ENCODE measurements at regions of chr6 and their contacts with region 1.

Region 1: DNA sequence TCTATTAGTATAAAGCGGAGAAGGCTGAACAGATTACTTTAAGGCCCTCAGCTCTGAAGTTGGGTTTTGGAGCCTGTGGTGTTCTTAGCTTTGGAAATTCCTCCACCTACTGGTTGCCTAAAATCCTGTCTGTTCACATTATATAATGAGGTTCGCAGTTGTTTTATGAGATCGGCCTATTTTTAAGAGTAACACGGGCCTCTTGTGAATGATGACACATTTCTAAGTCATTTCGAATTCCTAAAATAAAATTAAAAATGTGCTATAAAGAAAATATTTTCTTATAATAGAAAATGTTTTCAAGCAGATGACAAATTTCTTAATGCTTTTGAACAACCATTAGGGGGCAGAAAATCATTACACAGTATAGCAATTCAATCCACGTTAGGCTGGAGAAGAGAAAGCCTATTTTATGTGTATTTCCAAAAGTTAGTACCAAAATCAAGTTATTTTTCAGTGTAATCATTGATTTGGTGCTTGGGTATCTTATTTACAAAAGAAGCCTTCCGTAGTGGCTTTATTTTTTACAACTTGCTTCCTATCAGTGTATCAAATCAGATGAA is 15.8 kb upstream of the FAM8A1 start:
- DNase-seq: peak; percentile 67
- ATAC-seq: peak; percentile 78
- H3K4me3 ChIP-seq: peak overlapping the region in 2 of 3 experiments; percentile 34 to 52; a peak in 4 of 6 replicates
- H3K27ac ChIP-seq: no peak overlapping the region
- H3K4me1 ChIP-seq: peaks cover 35% of the 10 kb centered on the region
- H3K27me3 ChIP-seq: no peaks in the 10 kb centered on the region
- CTCF ChIP-seq: peak; percentile 84
- EP300 ChIP-seq: 0 out of 4 replicates have a peak, but pooled peaks of 1 of the 2 experiments have one; percentile 19
- POLR2A ChIP-seq: no peak
- RAD21 ChIP-seq: peak; percentile 78

Region 2: DNA sequence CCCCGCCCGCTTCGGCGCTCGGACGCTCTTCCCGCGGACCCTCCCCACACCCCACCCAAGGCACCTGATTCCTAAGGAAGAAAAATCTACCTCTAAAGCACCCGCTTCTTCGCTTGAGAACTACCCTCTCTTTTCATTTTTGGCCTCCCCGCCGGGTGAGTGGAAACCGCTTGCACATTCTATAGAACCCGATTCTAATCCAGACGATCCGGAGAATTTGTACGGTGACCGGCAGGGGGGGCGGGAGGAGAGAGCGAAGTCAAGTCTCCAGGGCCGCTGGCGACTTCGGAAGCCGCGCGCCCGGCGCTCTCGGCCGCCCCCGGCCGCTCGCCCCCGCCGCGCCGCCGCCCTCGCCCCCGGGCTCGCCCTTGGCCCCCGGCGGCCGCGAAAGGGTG is 303.2 kb before region 1 on chr6 and contains the start of gene RBM24:
- CTCF ChIA-PET with region 1: interaction called, 14 read pairs
- POLR2A ChIA-PET with region 1: no interaction called
- in situ Hi-C with region 1: loop called (anchors 5 kb)
- intact Hi-C with region 1: loop called (anchors 1 kb)
- DNase-seq: peak; percentile 66
- ATAC-seq: peak; percentile 79
- H3K4me3 ChIP-seq: peak within 1 kb of the TSS; percentile 82 to 94 (median 93)
- H3K27ac ChIP-seq: no peak within 1 kb of the TSS
- H3K4me1 ChIP-seq: peaks cover 20% of the 10 kb centered on the region
- H3K27me3 ChIP-seq: peaks cover 0 to 7% of the 10 kb centered on the region in 2 experiments; a peak in 1 of 5 replicates
- CTCF ChIP-seq: peak; percentile 64
- EP300 ChIP-seq: no peak
- POLR2A ChIP-seq: no peak
- RAD21 ChIP-seq: peak; percentile 67
- total RNA-seq, gene RBM24: 1.2 and 1.5 TPM in 2 replicates

Region 3: DNA sequence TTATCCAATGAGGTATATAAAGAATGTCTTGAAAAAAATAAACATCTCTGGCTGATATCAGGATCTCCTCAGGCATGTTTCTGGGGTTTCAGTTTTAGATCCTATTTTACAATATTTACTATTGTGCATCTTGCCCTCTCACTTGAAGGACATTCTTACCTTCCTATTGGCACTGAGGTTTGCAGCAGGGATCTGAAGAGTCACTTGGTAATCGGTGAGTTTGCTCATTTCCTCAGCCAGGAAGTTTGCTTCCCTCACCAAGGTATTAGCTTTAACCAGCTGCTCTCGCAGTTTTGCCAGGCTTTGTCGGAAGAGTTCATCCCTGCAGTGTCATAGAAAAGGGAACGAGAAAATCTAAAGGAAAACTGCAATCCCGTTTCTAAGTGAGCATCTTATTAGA is 224.3 kb after region 1 on chr6:
- CTCF ChIA-PET with region 1: interaction called, 5 read pairs
- POLR2A ChIA-PET with region 1: no interaction called
- in situ Hi-C with region 1: no loop called
- intact Hi-C with region 1: loop called (anchors 10 kb)
- DNase-seq: no peak
- ATAC-seq: no peak
- H3K4me3 ChIP-seq: no peak overlapping the region
- H3K27ac ChIP-seq: no peak overlapping the region
- H3K4me1 ChIP-seq: peaks cover 16% of the 10 kb centered on the region
- H3K27me3 ChIP-seq: no peaks in the 10 kb centered on the region
- CTCF ChIP-seq: no peak
- EP300 ChIP-seq: no peak
- POLR2A ChIP-seq: no peak
- RAD21 ChIP-seq: no peak